Activated CD4-positive, alpha-beta T cell treated with anti-CD3 and anti-CD28 coated beads for 36 hours (primary cell): ENCODE measurements at regions of chr1 and their contacts with region 1.

Region 1: GRCh38 chr1:89719502-89720306 is 86.8 kb downstream of the LRRC8C start:
- DNase-seq: no peak
- ATAC-seq: peak; percentile 83
- H3K4me3 Mint-ChIP-seq: peak overlapping the region; percentile 63
- H3K27ac Mint-ChIP-seq: peak overlapping the region; percentile 100
- H3K4me1 Mint-ChIP-seq: peaks cover 89% of the 10 kb centered on the region
- H3K27me3 Mint-ChIP-seq: no peaks in the 10 kb centered on the region

Region 2: GRCh38 chr1:89547563-89548485 is 171.9 kb before region 1 on chr1:
- CTCF ChIA-PET with region 1: interaction called, 6 read pairs
- POLR2A ChIA-PET with region 1: interaction called, 4 read pairs
- intact Hi-C with region 1: loop called (anchors 1 kb)
- DNase-seq: peak; percentile 70
- ATAC-seq: peak; percentile 48
- H3K4me3 Mint-ChIP-seq: peak overlapping the region; percentile 20
- H3K27ac Mint-ChIP-seq: peak overlapping the region; percentile 95
- H3K4me1 Mint-ChIP-seq: peaks cover 86% of the 10 kb centered on the region
- H3K27me3 Mint-ChIP-seq: no peaks in the 10 kb centered on the region

Region 3: GRCh38 chr1:89632657-89633247 is 87.0 kb before region 1 on chr1 and contains the start of gene LRRC8C:
- CTCF ChIA-PET with region 1: interaction called, 11 read pairs
- POLR2A ChIA-PET with region 1: interaction called, 7 read pairs
- intact Hi-C with region 1: loop called (anchors 1 kb)
- DNase-seq: peak; percentile 93
- ATAC-seq: peak; percentile 77
- H3K4me3 Mint-ChIP-seq: peak within 1 kb of the TSS; percentile 96
- H3K27ac Mint-ChIP-seq: peak within 1 kb of the TSS; percentile 98
- H3K4me1 Mint-ChIP-seq: peaks cover 66% of the 10 kb centered on the region
- H3K27me3 Mint-ChIP-seq: no peaks in the 10 kb centered on the region
- total RNA-seq, gene LRRC8C: 31.5 to 37.1 TPM

Region 4: GRCh38 chr1:89692601-89693521 is 26.8 kb before region 1 on chr1:
- CTCF ChIA-PET with region 1: interaction called, 19 read pairs
- POLR2A ChIA-PET with region 1: no interaction called
- intact Hi-C with region 1: loop called (anchors 2 kb)
- DNase-seq: no peak
- ATAC-seq: no peak
- H3K4me3 Mint-ChIP-seq: no peak overlapping the region
- H3K27ac Mint-ChIP-seq: peak overlapping the region; percentile 74
- H3K4me1 Mint-ChIP-seq: peaks cover 94% of the 10 kb centered on the region
- H3K27me3 Mint-ChIP-seq: no peaks in the 10 kb centered on the region

Region 5: DNA sequence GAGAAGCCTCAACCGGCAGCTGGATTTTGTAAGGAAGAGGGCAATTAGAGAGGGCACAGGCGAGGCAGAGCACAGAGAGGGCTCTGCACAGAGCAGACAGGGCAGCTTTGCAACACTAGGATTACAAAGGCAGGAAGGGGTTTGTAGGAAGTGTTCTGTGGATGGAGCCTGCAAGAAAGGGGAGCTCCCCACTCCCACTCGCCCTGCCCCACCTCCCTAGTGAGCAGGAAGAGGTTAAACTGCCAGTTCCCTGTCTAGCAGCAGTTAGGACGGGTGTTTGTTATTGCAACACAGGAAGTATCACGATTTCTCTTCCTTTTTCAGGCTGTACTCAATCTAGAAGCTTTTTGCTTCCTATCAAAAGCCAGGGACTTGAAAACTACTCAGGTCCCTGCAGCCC is 37.8 kb after region 1 on chr1:
- CTCF ChIA-PET with region 1: interaction called, 59 read pairs
- POLR2A ChIA-PET with region 1: interaction called, 8 read pairs
- intact Hi-C with region 1: loop called in 1 of 2 experiments (anchors 1 kb)
- DNase-seq: peak; percentile 84
- ATAC-seq: peak; percentile 88
- H3K4me3 Mint-ChIP-seq: peak overlapping the region; percentile 54
- H3K27ac Mint-ChIP-seq: peak overlapping the region; percentile 85
- H3K4me1 Mint-ChIP-seq: peaks cover 84% of the 10 kb centered on the region
- H3K27me3 Mint-ChIP-seq: no peaks in the 10 kb centered on the region

Region 6: GRCh38 chr1:89994805-89995597 is 275.3 kb after region 1 on chr1 and contains the start of gene ZNF326:
- CTCF ChIA-PET with region 1: no interaction called
- POLR2A ChIA-PET with region 1: no interaction called
- intact Hi-C with region 1: loop called in 1 of 2 experiments (anchors 5 kb)
- DNase-seq: peak; percentile 97
- ATAC-seq: peak; percentile 95
- H3K4me3 Mint-ChIP-seq: peak within 1 kb of the TSS; percentile 94
- H3K27ac Mint-ChIP-seq: peak within 1 kb of the TSS; percentile 92
- H3K4me1 Mint-ChIP-seq: peaks cover 42% of the 10 kb centered on the region
- H3K27me3 Mint-ChIP-seq: no peaks in the 10 kb centered on the region
- total RNA-seq, gene ZNF326: 19.4 to 20.5 TPM